Breast epithelium (tissue), 4 donors: ENCODE measurements at regions of chr4 and their contacts with region 1.

Region 1: DNA sequence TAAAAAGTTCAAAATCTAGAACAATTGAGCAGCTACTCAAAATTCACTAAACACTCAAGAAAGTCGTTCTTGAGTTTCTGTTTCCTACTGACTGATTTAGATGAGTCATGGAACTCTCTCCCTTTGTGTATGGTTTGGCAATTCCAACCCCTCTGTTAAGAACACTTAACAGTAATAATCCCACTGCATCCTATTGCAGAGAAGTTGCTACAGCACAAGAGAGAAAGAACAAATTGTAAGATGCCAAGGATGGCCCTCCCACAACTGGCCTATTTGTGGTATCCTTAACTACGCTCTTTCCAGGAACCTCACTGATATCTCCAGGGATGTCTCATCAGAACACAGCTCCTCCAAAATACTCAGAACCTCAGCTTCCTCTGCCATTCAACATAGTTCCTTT is 701.8 kb upstream of the TENM3 start:
- DNase-seq: no peak
- H3K4me3 ChIP-seq: no peak overlapping the region
- H3K27ac ChIP-seq: no peak overlapping the region
- H3K4me1 ChIP-seq: no peaks in the 10 kb centered on the region
- H3K27me3 ChIP-seq: no peaks in the 10 kb centered on the region
- CTCF ChIP-seq: no peak
- POLR2A ChIP-seq: no peak

Region 2: DNA sequence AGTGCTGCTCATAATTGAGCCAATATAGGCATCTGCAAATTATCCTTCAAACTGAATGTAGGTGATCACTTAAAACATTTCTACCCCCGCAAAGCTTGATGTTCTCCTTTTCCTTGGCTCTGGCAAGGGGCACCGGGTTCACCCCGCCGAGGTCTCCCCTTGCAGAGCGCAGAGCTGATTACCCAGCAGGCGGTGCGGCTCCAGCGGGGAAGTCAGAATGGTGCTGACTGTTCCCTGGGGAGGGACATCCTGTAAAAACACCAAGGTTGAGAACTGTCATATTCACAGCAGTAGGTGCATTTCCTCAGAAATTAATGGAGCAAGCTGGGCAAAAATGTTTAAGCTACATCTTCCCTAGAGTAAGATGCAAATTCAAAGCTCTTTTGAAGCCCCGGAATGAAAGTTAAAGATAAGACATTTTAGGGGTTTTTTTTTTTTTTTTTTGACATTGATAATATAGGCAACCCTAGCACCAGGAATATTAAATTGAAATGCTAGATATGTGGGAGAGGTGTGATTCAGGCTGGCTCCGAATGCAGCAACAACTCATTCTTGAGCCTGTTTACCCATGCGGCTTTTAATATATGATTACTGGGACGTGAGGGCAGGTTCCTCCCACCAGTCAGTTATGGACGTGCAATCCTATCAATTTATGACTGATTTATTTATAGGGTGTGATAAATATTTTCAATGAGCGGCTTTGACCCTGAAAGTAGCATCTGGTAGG is 65.5 kb before region 1 on chr4:
- intact Hi-C with region 1: loop called (anchors 2 kb)
- DNase-seq: no peak
- H3K4me3 ChIP-seq: no peak overlapping the region
- H3K27ac ChIP-seq: no peak overlapping the region
- H3K4me1 ChIP-seq: no peaks in the 10 kb centered on the region
- H3K27me3 ChIP-seq: no peaks in the 10 kb centered on the region
- CTCF ChIP-seq: no peak
- POLR2A ChIP-seq: no peak

Region 3: DNA sequence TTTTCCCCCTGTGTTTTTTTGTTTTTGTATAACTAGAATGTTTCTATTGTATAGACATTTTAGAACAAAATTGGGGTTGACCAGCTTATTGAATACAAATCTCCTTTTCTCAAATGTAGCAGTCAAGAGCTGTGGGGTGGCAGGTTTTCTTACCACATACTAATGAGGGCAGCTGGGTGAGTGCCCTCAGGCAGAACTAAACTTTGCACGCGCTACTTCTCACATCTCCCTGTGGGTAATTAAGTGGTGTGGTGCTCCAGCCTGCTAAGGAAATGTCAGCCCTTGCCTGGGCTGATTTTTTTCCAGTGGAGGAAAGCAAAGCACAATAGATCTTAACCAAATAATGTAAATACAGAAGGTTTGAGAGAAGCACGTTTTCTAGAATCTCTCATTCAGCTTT is 15.8 kb before region 1 on chr4:
- intact Hi-C with region 1: no loop called
- DNase-seq: no peak
- H3K4me3 ChIP-seq: no peak overlapping the region
- H3K27ac ChIP-seq: no peak overlapping the region
- H3K4me1 ChIP-seq: no peaks in the 10 kb centered on the region
- H3K27me3 ChIP-seq: peaks cover 0 to 3% of the 10 kb centered on the region in 2 donors
- CTCF ChIP-seq: no peak
- POLR2A ChIP-seq: no peak